BJ (cell line): ENCODE measurements at regions of chr22 and their contacts with region 1.

Region 1: DNA sequence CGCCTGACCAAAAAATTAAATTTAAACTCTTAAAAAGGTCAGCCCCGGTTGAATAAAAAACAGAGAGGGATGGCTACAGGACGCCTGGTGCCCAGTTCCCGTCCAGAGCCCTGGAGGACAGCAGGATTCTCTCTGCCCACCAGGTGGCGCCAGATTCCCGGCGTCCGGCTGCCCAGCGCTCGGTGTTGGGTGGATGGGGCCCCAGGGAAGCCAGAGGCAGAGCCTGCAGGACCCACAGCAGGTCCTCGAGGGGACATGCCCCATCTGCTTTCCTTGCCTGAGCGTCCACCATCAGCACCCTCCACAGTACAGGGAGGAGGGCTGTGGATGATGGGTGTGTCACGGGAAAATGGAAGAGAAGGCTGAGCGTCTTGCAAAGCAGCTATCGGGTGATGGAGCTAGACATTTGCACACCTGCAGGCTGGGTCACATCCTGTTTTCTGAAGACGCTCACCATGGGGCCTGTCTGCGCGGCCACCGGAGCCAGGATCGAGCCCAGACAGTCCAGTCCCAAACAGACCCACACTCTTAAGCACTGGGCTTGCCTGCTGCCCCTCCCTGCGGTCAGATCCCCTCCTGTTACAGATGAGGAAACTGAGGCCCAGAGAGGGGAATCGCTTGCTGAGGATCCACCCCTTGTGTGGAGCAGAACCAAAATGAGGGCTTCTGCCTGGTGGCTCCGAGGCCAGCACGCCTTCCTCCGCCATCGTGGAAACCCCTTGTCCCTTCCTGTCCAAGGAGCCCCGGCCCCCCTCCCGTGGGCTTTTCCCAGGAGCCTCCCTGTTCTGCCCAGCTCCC is 18.5 kb upstream of the CBX7 start:
- DNase-seq: no peak
- H3K4me3 ChIP-seq: no peak overlapping the region
- H3K27me3 ChIP-seq: peaks cover 2% of the 10 kb centered on the region; the same call in 1 of the 2 replicates
- CTCF ChIP-seq: peak; percentile 93

Region 2: GRCh38 chr22:38230108-38230825 is 940.8 kb before region 1 on chr22:
- CTCF ChIA-PET with region 1: no interaction called
- POLR2A ChIA-PET with region 1: interaction called, 12 read pairs
- DNase-seq: no peak
- H3K4me3 ChIP-seq: no peak overlapping the region
- H3K27me3 ChIP-seq: no peaks in the 10 kb centered on the region
- CTCF ChIP-seq: peak; percentile 32

Region 3: GRCh38 chr22:39153220-39153717 is 17.8 kb before region 1 on chr22:
- CTCF ChIA-PET with region 1: interaction called, 21 read pairs
- POLR2A ChIA-PET with region 1: no interaction called
- DNase-seq: no peak
- H3K4me3 ChIP-seq: peak overlapping the region; percentile 55
- H3K27me3 ChIP-seq: peaks cover 16% of the 10 kb centered on the region
- CTCF ChIP-seq: no peak

Region 4: DNA sequence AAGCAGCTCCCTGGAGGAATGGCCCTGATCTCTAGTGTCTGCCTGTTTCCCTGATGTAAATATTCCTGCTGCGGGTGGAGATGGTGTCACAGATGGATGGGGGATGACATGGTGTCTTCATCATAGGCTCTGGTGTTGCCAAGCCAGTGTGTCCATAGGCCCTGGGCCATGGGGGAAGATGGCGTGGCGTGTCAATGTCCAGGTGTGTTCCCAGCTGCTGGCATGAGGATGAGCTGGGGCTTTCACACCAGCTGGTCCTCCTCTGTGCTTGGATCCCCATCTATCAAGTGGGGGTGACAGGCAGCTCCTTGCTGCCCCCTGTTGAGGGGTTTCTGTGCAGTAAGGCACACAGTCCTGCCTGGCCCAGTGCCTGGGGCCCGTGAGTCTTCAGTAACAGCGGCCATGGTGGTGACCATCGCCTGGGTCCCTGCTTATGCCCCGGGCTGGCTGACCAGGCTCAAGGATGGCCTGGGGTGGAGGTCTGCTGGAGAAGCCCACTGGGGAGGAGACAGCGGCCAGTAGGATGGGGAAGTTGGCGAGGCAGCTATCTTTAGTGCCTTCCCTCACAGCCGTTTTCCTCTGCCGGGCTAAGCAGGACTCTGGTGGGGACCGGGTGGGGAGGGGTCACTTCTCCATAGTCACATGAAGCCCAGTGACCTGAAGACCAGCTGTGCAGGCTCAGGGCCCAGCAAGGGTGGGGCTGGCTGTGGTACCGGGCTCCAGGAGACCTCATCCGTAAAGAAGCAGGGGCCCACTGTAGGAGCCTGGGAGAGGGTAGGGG is 135.7 kb after region 1 on chr22:
- CTCF ChIA-PET with region 1: interaction called, 164 read pairs
- POLR2A ChIA-PET with region 1: interaction called, 3 read pairs
- DNase-seq: no peak
- H3K4me3 ChIP-seq: no peak overlapping the region
- H3K27me3 ChIP-seq: no peaks in the 10 kb centered on the region
- CTCF ChIP-seq: peak; percentile 27; the same call in 1 of the 2 replicates

Region 5: DNA sequence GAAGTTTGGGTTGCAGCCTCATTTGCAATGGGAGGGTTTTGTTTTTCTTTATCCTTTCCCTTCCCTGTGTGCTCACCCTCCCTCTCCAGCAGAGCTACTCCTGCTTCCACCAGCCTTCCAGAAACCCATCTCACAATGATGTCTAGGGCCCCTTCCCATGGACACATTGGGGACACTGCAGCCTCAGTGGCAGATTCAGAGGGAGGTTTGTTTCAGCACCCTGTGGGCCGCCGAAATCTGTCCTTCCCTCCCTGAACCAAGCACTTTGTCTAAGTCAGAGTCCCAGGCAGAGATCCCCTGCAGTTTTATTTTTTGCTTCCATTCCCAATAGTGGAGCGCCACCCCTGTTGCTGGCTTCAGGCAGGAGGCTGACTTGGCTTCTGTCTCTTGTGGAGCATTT is 170.2 kb after region 1 on chr22:
- CTCF ChIA-PET with region 1: no interaction called
- POLR2A ChIA-PET with region 1: no interaction called
- DNase-seq: no peak
- H3K4me3 ChIP-seq: no peak overlapping the region
- H3K27me3 ChIP-seq: no peaks in the 10 kb centered on the region
- CTCF ChIP-seq: no peak